A673 (cell line): ENCODE measurements at regions of chr4 and their contacts with region 1.

Region 1: GRCh38 chr4:163332500-163333406 is at the start of gene NPY1R:
- DNase-seq: peak; percentile 91
- H3K4me3 ChIP-seq: peak within 1 kb of the TSS; percentile 75
- H3K27ac ChIP-seq: peak within 1 kb of the TSS; percentile 76
- H3K4me1 ChIP-seq: peaks cover 9% of the 10 kb centered on the region
- H3K27me3 ChIP-seq: no peaks in the 10 kb centered on the region
- CTCF ChIP-seq: peak; percentile 83
- total RNA-seq, gene NPY1R: 59.8 and 64.4 TPM in 2 replicates

Region 2: DNA sequence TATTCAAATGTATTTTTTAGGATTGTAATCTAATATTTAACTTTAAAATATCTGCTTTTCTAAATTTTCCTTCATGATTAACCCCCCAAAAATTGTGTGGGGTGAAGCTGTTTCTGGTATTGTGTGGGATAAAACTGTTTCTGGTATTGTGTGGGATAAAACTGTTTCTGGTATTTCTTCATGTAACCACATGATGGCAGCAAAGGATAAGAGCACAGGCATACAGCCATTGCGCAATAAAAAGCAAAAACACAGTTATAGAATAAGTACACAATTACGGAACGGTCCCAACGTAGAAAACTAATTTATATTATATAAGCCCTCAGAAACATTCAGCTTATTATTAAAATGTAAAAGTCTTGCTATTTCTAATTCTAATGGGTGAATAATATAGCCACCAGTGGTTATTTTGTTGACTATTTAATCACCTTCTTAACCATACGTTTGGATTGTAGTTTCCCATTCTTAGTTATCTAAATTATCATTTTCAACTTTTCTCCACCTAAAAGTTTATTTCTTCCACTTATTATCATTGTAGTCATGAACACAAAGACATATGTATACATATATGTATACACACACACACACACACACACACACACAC is 835.1 kb before region 1 on chr4:
- CTCF ChIA-PET with region 1: interaction called, 4 read pairs
- POLR2A ChIA-PET with region 1: no interaction called
- intact Hi-C with region 1: loop called (anchors 2 kb)
- DNase-seq: peak; percentile 57
- H3K4me3 ChIP-seq: no peak overlapping the region
- H3K27ac ChIP-seq: no peak overlapping the region
- H3K4me1 ChIP-seq: no peaks in the 10 kb centered on the region
- H3K27me3 ChIP-seq: no peaks in the 10 kb centered on the region
- CTCF ChIP-seq: peak; percentile 76

Region 3: DNA sequence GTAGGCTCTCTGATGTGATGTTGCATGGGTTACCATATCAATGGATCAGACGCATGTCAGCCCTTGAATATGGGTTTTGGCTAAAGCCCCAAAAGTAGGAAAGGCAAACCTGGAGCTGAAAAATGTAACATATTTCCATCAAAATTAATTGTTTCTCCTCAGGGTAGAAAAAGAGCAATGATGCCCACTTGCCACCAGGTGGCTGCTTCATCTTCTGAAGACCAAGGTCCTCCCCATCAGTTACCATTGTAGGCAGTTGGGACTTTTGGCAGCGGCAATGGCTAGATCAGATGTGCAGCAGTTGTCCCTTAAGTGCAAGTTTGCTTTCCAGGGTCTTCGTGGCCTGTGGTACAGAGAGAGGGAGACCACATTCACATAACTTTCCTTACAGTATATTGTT is 284.3 kb before region 1 on chr4:
- CTCF ChIA-PET with region 1: interaction called, 3 read pairs
- POLR2A ChIA-PET with region 1: no interaction called
- intact Hi-C with region 1: loop called (anchors 1 kb)
- DNase-seq: peak; percentile 72
- H3K4me3 ChIP-seq: no peak overlapping the region
- H3K27ac ChIP-seq: no peak overlapping the region
- H3K4me1 ChIP-seq: no peaks in the 10 kb centered on the region
- H3K27me3 ChIP-seq: no peaks in the 10 kb centered on the region
- CTCF ChIP-seq: peak; percentile 65

Region 4: GRCh38 chr4:163107754-163108153 is 225.0 kb before region 1 on chr4:
- CTCF ChIA-PET with region 1: interaction called, 5 read pairs
- POLR2A ChIA-PET with region 1: no interaction called
- intact Hi-C with region 1: loop called (anchors 1 kb)
- DNase-seq: peak; percentile 54
- H3K4me3 ChIP-seq: no peak overlapping the region
- H3K27ac ChIP-seq: no peak overlapping the region
- H3K4me1 ChIP-seq: no peaks in the 10 kb centered on the region
- H3K27me3 ChIP-seq: no peaks in the 10 kb centered on the region
- CTCF ChIP-seq: peak; percentile 57

Region 5: GRCh38 chr4:163148466-163149336 is 184.1 kb before region 1 on chr4:
- CTCF ChIA-PET with region 1: no interaction called
- POLR2A ChIA-PET with region 1: no interaction called
- intact Hi-C with region 1: no loop called
- DNase-seq: no peak
- H3K4me3 ChIP-seq: no peak overlapping the region
- H3K27ac ChIP-seq: no peak overlapping the region
- H3K4me1 ChIP-seq: peaks cover 8% of the 10 kb centered on the region
- H3K27me3 ChIP-seq: no peaks in the 10 kb centered on the region
- CTCF ChIP-seq: no peak

Region 6: DNA sequence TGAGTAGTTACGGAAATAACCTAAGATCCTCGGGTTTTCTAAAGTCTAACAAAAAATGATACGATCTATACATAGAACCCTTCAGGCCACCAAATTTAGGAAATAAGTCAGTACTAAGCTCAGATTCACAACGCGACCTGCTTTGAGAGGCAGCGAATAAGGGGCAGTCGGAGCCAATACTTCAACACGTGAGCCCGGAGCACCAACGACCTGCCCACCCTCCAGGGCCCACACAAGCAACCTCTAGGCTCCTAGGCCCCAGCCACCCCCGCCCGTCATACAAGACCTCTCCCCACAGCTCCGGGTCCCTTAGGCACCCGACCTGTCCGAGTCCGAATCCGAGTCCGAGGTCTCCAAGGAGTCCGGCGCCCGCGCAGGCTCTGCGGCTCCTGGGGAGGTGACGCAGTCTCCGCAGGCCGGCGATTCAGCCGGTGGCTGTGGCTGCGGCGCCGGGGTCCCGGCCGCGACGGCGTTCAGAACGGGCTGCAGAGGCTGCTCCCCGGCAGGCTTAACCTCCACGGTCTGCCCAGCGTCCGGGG is 166.6 kb before region 1 on chr4:
- CTCF ChIA-PET with region 1: no interaction called
- POLR2A ChIA-PET with region 1: no interaction called
- intact Hi-C with region 1: loop called (anchors 5 kb)
- DNase-seq: peak; percentile 52
- H3K4me3 ChIP-seq: peak overlapping the region; percentile 90
- H3K27ac ChIP-seq: peak overlapping the region; percentile 93
- H3K4me1 ChIP-seq: peaks cover 7% of the 10 kb centered on the region
- H3K27me3 ChIP-seq: no peaks in the 10 kb centered on the region
- CTCF ChIP-seq: no peak

Region 7: DNA sequence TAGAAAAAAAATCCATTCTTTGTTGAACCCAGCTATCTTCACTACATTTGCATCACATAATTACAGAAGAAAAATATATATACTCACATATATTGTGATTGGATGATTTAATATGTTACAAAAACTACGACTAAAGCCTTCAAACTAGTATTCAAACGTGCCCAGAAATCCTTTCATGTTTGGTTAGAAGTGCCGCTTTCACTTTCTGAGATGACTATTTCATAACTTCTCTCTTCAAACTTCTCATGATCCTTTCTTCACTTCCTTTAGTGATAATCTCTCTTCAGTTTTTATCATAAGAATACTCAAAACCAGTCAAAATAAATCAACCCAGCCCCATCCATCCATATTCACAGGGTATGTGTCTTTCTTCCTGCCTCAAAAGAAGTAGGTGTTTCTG is 115.2 kb before region 1 on chr4:
- CTCF ChIA-PET with region 1: interaction called, 3 read pairs
- POLR2A ChIA-PET with region 1: no interaction called
- intact Hi-C with region 1: loop called (anchors 5 kb)
- DNase-seq: no peak
- H3K4me3 ChIP-seq: no peak overlapping the region
- H3K27ac ChIP-seq: peak overlapping the region; percentile 71
- H3K4me1 ChIP-seq: peaks cover 11% of the 10 kb centered on the region
- H3K27me3 ChIP-seq: no peaks in the 10 kb centered on the region
- CTCF ChIP-seq: no peak

Region 8: DNA sequence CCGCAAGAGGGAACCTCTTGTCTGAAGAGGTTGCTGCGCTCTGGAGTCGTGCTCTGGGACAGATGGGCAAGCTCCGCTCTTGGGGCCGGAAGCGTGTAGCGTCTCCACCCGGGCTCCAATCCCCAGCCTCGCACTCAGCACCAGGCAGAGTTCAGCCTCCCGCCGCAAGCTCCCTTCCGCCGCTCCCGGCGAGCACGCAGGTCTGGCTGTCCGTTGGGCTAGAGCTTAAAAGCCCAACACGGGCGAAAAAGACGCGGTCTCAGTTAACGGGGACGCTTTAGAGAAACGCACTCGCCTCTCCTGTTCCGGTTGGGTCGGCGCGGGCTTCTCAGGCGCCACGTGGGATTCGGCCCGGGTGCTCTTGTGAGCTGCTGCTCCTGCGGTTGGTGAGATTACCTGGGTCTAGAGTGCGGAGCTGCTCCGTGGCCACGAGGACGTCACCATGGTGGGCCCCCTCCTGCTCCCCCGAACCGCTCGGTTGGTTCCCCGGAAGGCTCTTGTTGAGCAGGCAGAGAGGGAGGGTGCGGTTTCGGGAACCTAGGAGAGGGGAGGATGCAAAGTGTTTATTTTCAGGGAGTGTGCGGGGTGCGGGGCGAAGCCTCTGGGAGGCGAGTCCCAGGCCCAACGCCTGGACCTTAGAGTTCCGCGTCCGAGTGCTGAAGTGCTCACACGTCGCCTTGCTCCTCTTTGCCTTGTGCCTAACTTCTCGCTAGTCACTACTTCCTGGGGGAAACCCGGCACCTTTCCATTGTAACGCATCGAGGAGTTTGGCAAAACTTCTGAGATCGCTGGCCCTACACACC is 161.8 kb after region 1 on chr4 and contains the start of gene TMA16:
- CTCF ChIA-PET with region 1: no interaction called
- POLR2A ChIA-PET with region 1: no interaction called
- intact Hi-C with region 1: loop called (anchors 2 kb)
- DNase-seq: peak; percentile 97
- H3K4me3 ChIP-seq: peak within 1 kb of the TSS; percentile 90
- H3K27ac ChIP-seq: peak within 1 kb of the TSS; percentile 98
- H3K4me1 ChIP-seq: peaks cover 3% of the 10 kb centered on the region
- H3K27me3 ChIP-seq: no peaks in the 10 kb centered on the region
- CTCF ChIP-seq: no peak
- total RNA-seq, gene TMA16: 83.5 and 84.8 TPM in 2 replicates

Region 9: GRCh38 chr4:163505374-163505773 is 172.6 kb after region 1 on chr4:
- CTCF ChIA-PET with region 1: no interaction called
- POLR2A ChIA-PET with region 1: no interaction called
- intact Hi-C with region 1: no loop called
- DNase-seq: no peak
- H3K4me3 ChIP-seq: no peak overlapping the region
- H3K27ac ChIP-seq: no peak overlapping the region
- H3K4me1 ChIP-seq: peaks cover 11% of the 10 kb centered on the region
- H3K27me3 ChIP-seq: no peaks in the 10 kb centered on the region
- CTCF ChIP-seq: no peak

Region 10: GRCh38 chr4:163534056-163534455 is 201.3 kb after region 1 on chr4:
- CTCF ChIA-PET with region 1: no interaction called
- POLR2A ChIA-PET with region 1: no interaction called
- intact Hi-C with region 1: no loop called
- DNase-seq: no peak
- H3K4me3 ChIP-seq: no peak overlapping the region
- H3K27ac ChIP-seq: no peak overlapping the region
- H3K4me1 ChIP-seq: no peaks in the 10 kb centered on the region
- H3K27me3 ChIP-seq: no peaks in the 10 kb centered on the region
- CTCF ChIP-seq: no peak